Right cardiac atrium (tissue), 5 donors: ENCODE measurements at regions of chr22 and their contacts with region 1.

Region 1: DNA sequence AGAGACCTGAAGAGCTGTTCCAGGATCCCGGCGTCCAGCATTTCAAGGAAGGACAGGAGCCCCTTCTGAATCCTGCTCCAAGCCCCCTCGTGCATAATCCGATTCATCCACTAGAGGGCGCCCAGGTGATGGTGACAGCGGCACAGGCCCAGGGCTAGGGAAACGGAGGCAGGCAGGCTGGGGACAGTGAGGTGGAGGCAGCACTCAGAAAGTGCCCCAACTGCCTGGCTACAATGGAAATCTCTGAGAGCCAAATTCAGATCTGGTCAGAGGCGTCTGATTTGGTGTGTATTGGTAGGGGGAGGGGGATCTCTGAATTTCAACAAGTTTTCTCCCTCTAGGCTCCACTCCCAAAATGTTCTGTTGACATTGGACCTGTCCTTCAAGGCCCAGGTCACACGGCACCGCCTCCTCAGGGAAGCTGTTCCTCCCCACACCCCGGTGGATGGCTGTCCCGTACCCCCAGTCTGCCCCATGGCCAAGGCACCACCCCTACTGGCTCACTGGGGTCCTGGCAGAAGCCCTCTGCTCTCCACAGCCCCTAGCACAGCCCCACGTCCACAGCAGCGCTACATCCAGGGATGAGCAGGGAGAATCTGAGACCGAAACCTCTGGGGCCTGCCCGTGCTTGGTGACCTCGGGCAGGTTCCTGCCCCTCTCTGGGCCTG is 142.9 kb downstream of the CRYBB2 start:
- DNase-seq: peak; percentile 61 to 89 (median 82)
- ATAC-seq: peak; percentile 36 to 55
- H3K4me3 ChIP-seq: no peak overlapping the region
- H3K27ac ChIP-seq: no peak overlapping the region
- H3K4me1 ChIP-seq: peaks cover 2% of the 10 kb centered on the region
- H3K27me3 ChIP-seq: no peaks in the 10 kb centered on the region

Region 2: DNA sequence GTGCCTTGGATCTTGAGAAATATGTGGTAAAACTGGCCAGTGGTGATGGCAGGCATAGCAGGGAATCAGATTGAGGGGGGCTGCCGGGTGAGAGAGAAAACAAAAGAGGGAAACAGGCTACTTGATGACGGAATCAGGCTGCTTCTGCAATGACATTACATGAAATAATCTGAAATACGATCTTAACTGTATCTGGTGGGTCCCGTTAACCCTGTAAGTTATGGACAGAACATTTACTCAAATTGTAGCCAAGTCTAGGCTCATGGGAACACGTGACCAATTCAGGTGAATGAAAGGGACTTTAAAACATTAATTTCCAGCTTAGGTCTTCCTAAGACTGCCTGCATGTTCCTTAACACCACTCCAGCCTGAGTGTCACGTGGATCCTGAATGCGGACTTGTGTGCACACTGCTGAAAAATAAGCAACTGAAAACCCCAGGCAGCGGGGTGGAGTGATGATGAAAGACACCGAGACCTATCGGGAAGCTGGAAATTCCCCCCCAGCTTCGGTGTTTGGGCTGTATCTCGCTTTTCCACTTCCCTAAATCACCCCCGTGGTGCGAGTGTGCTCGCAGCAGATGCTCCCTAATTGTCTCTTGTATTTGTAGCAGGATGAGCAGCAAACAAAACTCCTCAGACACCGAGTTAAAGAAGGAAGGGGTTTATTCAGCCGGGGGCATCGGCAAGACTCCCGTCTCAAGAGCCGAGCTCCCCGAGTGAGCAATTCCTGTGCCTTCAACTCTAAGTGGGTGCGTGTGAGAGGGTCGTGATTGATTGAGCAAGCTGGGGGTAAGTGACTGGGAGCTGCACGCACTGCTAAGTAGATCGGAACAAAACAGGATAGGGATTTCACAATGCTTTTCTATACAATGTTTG is 57.1 kb after region 1 on chr22:
- intact Hi-C with region 1: loop called in 1 of 4 experiments (anchors 10 kb)
- DNase-seq: peak in 2 of 3 donors; percentile 57 to 58
- ATAC-seq: peak; percentile 41 to 67
- H3K4me3 ChIP-seq: no peak overlapping the region
- H3K27ac ChIP-seq: no peak overlapping the region
- H3K4me1 ChIP-seq: no peaks in the 10 kb centered on the region
- H3K27me3 ChIP-seq: no peaks in the 10 kb centered on the region

Region 3: DNA sequence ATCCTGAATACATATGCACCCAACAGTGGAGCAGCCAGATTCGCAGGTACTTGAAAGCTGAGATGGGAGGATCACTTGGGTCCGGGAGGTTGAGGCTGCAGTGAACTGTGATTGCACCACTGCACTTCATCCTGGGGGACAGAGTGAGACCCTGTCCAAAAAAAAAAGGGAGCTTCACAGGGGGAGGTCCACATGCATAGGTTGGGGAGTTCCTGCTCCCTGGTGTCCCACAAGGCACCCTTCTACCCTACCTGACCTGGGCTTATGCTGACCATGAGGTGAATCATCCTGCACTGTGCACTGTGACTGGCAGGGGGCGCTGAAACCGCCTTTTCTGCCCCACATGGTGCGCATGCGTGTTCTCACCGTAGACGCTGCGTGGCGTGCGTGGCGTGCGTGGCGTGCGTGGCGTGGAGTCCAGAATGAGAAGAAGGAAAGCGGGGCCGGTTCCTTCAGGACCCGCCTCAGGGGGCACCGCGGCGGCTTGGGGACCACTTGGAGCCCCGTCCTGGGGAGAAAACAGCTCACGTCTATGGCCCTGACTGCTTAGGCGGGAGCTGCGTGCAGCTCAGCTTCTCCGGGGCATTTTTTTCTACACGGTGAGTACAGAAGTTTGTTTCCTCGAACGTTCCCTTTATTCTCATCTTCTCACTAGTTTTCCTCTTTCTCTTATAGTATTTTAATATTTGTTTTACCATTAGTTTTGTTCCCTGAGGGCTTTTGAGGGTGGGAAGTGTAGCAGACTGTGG is 85.5 kb after region 1 on chr22:
- intact Hi-C with region 1: loop called in 2 of 4 experiments (anchors 5 to 10 kb)
- DNase-seq: peak; percentile 91 to 96 (median 96)
- ATAC-seq: peak; percentile 94
- H3K4me3 ChIP-seq: peak overlapping the region; percentile 71
- H3K27ac ChIP-seq: peak overlapping the region; percentile 31
- H3K4me1 ChIP-seq: no peaks in the 10 kb centered on the region
- H3K27me3 ChIP-seq: no peaks in the 10 kb centered on the region